ENCODE measurements at regions of chr15 and their contacts with region 1.

Region 1: DNA sequence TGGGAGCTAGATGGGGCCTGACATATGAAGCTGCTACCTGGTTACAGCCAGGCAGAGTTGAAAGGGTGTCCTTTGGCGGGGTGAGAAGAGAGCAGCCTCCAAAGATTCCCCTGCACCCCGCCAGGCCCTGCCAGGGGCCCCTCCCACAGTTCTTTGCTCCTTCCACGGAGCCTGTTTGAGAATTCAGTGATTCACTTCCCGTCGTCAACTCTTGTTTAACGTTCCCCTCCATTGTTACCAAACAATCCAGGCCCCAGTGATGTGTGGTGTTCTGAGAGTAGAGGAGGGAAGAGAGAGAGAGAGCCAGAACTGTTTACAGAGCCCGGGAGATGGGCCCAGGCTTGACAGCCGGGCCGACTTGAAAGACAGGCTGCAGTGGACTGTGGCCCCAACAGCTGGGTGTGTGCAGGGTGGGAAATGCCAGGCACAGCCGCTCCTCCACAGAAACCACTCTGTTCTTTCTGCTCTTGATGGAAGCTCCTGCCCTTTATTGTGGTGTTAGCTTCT is 81.5 kb downstream of the SMAD3 start:
- DNase-seq: peak in 1 of 2 donors; percentile 62
- ATAC-seq: peak; percentile 35 to 76 (median 64)
- H3K4me3 ChIP-seq: no peak overlapping the region
- H3K27ac ChIP-seq: peak overlapping the region; percentile 14 to 87 (median 74)
- H3K4me1 ChIP-seq: peaks cover 20 to 98% (median 69%) of the 10 kb centered on the region in 9 donors
- H3K27me3 ChIP-seq: no peaks in the 10 kb centered on the region
- CTCF ChIP-seq: no peak

Region 2: DNA sequence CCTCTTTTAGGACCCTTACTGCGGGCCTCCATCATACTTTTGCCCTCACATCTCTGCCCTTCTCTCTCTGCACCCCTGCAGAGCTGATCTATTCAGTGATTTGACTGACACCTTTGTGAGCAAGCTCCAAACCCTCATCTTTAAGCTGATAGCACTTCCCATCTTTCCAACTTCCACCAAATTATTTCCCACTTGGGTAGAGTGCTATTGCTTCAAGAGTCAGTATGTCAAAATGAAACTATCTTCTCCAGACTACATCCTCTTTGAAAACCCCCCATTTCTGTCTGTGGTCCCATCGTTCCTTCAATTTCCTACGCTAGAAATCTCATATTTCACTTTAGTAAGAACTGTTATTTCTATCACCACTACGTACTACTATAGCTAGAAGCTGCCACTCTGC is 622.1 kb before region 1 on chr15:
- intact Hi-C with region 1: no loop called
- DNase-seq: no peak
- ATAC-seq: no peak
- H3K4me3 ChIP-seq: no peak overlapping the region
- H3K27ac ChIP-seq: no peak overlapping the region
- H3K4me1 ChIP-seq: no peaks in the 10 kb centered on the region
- H3K27me3 ChIP-seq: no peaks in the 10 kb centered on the region
- CTCF ChIP-seq: no peak

Region 3: GRCh38 chr15:67101911-67102598 is 44.9 kb before region 1 on chr15:
- intact Hi-C with region 1: loop called in 2 of 10 experiments (anchors 5 kb)
- DNase-seq: no peak
- ATAC-seq: no peak
- H3K4me3 ChIP-seq: no peak overlapping the region
- H3K27ac ChIP-seq: peak overlapping the region in 1 of 10 donors; percentile 70
- H3K4me1 ChIP-seq: peaks cover 24 to 100% (median 74%) of the 10 kb centered on the region in 9 donors
- H3K27me3 ChIP-seq: no peaks in the 10 kb centered on the region
- CTCF ChIP-seq: no peak

Region 4: GRCh38 chr15:67109141-67110034 is 37.5 kb before region 1 on chr15:
- intact Hi-C with region 1: loop called in 2 of 10 experiments (anchors 5 kb)
- DNase-seq: peak; percentile 57 to 72
- ATAC-seq: peak; percentile 24 to 79 (median 52)
- H3K4me3 ChIP-seq: no peak overlapping the region
- H3K27ac ChIP-seq: peak overlapping the region in 8 of 10 donors; percentile 9 to 57 (median 32)
- H3K4me1 ChIP-seq: peaks cover 25 to 87% (median 59%) of the 10 kb centered on the region in 9 donors
- H3K27me3 ChIP-seq: no peaks in the 10 kb centered on the region
- CTCF ChIP-seq: no peak

Region 5: DNA sequence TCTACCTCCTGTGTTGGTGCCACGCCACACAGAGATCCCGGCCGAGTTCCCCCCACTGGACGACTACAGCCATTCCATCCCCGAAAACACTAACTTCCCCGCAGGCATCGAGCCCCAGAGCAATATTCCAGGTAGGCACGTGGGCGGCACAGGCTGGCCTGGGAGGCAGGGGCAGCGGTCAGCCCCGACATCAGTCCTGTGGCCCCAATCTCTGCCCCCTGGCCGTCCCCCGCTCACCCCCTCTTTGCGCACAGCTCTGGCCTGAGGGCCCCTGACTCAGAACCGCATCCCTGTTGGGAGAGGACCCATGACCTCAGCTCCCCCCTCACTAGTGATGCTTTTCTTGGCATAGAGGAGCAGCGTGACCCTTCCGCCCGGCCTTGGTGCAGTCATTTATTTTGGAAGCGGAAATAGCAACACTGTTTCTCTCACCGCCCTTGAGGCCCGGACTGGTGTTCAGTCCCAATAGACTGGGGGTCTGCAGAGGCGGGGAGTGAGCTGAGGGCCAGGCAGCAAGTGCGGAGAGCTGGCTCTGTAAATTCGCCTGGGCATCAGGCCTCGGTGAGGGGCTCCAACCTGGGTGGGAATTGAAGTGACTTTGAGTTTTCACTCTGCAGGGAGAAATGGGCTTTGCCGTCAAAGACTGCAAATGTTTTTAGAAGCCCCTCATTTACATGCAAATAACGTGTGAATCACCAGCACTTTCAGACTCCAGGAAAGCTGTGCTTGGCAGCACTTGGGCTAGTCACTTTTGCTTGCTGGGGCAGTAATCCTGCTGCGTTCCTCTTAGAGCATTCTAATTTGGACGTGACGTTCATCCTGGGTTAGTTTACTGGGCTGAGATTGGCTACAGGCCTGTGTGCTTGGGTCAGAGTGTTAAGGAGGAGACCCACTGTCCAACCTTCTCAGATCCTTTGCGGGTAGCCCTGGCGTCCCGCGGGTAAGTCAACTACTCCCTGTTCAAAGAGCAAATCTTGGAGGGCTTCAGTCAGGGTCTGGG is 18.6 kb after region 1 on chr15:
- intact Hi-C with region 1: no loop called
- DNase-seq: peak; percentile 63 to 73
- ATAC-seq: peak; percentile 46 to 83 (median 62)
- H3K4me3 ChIP-seq: no peak overlapping the region
- H3K27ac ChIP-seq: peak overlapping the region in 9 of 10 donors; percentile 32 to 74 (median 51)
- H3K4me1 ChIP-seq: peaks cover 10 to 74% (median 56%) of the 10 kb centered on the region in 9 donors
- H3K27me3 ChIP-seq: no peaks in the 10 kb centered on the region
- CTCF ChIP-seq: no peak

Measured in heart right ventricle (tissue), 16 donors.